CD8-positive, alpha-beta memory T cell (primary cell): ENCODE measurements at regions of chr17 and their contacts with region 1.

Region 1: GRCh38 chr17:48047741-48048383 is at the start of gene NFE2L1:
- DNase-seq: peak; percentile 96 to 99 (median 98)
- H3K4me3 ChIP-seq: peak within 1 kb of the TSS; percentile 84
- H3K4me3 Mint-ChIP-seq: peak within 1 kb of the TSS; percentile 85 to 99 (median 96)
- H3K27ac ChIP-seq: peak within 1 kb of the TSS; percentile 93
- H3K27ac Mint-ChIP-seq: peak within 1 kb of the TSS; percentile 85 to 100 (median 98)
- H3K4me1 ChIP-seq: peaks cover 50% of the 10 kb centered on the region
- H3K4me1 Mint-ChIP-seq: peaks cover 46 to 64% (median 62%) of the 10 kb centered on the region in 3 donors
- H3K27me3 ChIP-seq: no peaks in the 10 kb centered on the region
- H3K27me3 Mint-ChIP-seq: peaks cover 0 to 6% of the 10 kb centered on the region in 2 donors
- total RNA-seq, gene NFE2L1: 94.5 to 98.4 TPM

Region 2: DNA sequence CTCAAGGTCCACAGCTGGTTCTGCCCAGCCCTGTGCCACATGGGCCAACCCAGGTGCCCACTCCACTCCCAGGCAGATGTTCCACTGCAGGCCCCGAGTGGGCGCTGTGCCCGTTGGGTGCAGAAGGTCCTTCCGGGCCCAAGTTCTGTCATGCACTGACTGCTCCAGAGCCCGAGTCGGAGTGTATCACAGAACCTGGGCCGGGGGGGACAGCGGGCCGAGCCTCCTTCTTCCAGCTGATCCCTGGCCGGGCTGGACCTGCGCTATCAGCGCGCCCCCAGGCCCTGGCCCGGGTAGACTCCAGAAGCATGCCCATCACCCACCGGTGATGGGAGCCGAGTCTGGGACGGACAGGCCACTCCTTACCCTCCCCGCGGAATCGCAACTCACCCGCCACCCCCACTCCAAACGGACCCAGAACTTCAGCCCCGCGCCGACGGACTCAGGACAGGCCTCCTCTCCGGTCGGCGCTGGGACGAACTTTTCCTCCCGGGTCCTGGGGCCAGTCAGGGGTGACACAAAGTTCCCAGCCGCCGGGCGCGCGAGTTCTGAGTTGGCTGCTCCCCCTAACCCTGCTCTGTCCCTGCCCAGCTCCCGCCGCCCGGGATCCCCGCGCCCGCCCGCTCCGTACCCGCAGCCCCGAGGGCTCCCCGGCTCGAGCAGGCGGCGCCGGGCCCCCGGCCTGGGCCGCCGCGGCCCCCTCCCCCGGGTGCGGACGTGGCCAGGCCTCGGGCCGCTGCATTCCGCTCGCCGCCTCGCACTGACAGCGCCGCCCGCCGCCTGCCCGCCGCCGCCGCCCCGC is 10.6 kb before region 1 on chr17 and contains the start of gene COPZ2:
- CTCF ChIA-PET with region 1: interaction called, 47 read pairs
- POLR2A ChIA-PET with region 1: interaction called, 3 read pairs
- DNase-seq: peak; percentile 50 to 78 (median 55)
- H3K4me3 ChIP-seq: peak within 1 kb of the TSS; percentile 66
- H3K4me3 Mint-ChIP-seq: peak within 1 kb of the TSS; percentile 83 to 96 (median 88)
- H3K27ac ChIP-seq: no peak within 1 kb of the TSS
- H3K27ac Mint-ChIP-seq: peak within 1 kb of the TSS in 4 of 8 donors; percentile 37 to 79 (median 60)
- H3K4me1 ChIP-seq: peaks cover 5% of the 10 kb centered on the region
- H3K4me1 Mint-ChIP-seq: peaks cover 4 to 15% (median 10%) of the 10 kb centered on the region in 3 donors
- H3K27me3 ChIP-seq: peaks cover 19% of the 10 kb centered on the region
- H3K27me3 Mint-ChIP-seq: peaks cover 33 to 37% of the 10 kb centered on the region in 2 donors
- total RNA-seq, gene COPZ2: 7.6 to 8.3 TPM

Region 3: GRCh38 chr17:48107168-48108132 is 59.6 kb after region 1 on chr17 and contains the start of gene SNX11:
- CTCF ChIA-PET with region 1: interaction called, 4 read pairs
- POLR2A ChIA-PET with region 1: interaction called, 17 read pairs
- DNase-seq: peak; percentile 90 to 96 (median 95)
- H3K4me3 ChIP-seq: peak within 1 kb of the TSS; percentile 96
- H3K4me3 Mint-ChIP-seq: peak within 1 kb of the TSS; percentile 92 to 100 (median 97)
- H3K27ac ChIP-seq: peak within 1 kb of the TSS; percentile 80
- H3K27ac Mint-ChIP-seq: peak within 1 kb of the TSS; percentile 86 to 97 (median 92)
- H3K4me1 ChIP-seq: peaks cover 18% of the 10 kb centered on the region
- H3K4me1 Mint-ChIP-seq: peaks cover 51 to 70% (median 66%) of the 10 kb centered on the region in 3 donors
- H3K27me3 ChIP-seq: no peaks in the 10 kb centered on the region
- H3K27me3 Mint-ChIP-seq: peaks cover 0 to 2% of the 10 kb centered on the region in 2 donors
- total RNA-seq, gene SNX11: 43.3 to 45.2 TPM